ENCODE measurements at regions of chr22 and their contacts with region 1.

Region 1: DNA sequence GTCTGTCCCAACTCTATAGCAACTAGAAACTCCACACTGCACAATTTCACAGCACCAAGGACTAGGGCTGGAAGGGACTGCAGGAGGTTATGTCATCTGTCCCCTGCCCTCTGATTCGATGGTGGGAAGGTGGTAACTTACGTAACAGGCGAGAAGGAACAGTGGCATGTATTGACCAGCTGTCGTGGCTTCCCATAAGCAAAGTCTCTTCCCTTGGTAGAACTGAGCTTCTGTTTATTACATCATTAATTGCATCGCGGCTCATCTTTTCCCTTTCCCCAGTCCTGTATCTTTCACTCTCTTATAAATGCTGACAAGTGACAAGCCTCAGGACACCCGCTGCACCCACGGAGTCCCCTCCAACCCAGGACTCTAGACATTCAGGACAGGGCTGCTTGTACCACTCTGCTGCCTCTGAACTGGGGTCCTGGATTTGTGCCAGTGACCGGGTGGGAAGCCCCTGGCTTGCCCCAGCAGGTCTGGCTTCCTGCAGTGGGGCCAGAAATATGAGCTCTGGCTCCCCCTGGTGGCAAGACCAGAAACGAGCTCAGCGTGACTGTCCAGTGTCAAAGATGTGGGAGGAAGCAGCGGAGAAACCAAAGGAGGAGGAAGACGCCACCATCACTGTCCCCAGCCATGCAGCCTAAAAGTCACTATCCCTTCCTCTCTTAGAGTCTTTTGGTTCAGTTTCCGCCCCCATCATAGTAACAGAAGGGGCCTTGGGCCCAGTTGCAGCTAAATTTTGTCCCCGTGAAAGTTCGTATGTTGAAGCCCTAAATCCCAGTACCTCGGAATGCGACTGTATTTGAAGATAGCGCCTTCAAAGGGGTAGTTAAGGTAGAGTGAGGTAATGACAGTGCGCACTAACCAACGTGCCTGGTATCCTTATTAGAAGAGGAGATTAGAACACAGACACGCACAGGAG is 84.5 kb downstream of the ISX start:
- DNase-seq: peak; percentile 46 to 75 (median 59)
- ATAC-seq: peak in 3 of 4 donors; percentile 54 to 80 (median 72)
- H3K4me3 ChIP-seq: no peak overlapping the region
- H3K27ac ChIP-seq: no peak overlapping the region
- H3K4me1 ChIP-seq: peaks cover 0 to 7% (median 0%) of the 10 kb centered on the region in 12 donors
- H3K27me3 ChIP-seq: peaks cover 0 to 21% (median 1%) of the 10 kb centered on the region in 9 donors
- CTCF ChIP-seq: peak; percentile 52 to 80 (median 71)
- POLR2A ChIP-seq: no peak

Region 2: GRCh38 chr22:33756508-33756949 is 1393.9 kb before region 1 on chr22:
- intact Hi-C with region 1: loop called in 1 of 10 experiments (anchors 10 kb)
- DNase-seq: peak in 3 of 5 donors; percentile 35 to 43 (median 37)
- ATAC-seq: peak; percentile 42 to 79 (median 62)
- H3K4me3 ChIP-seq: no peak overlapping the region
- H3K27ac ChIP-seq: peak overlapping the region in 4 of 12 donors; percentile 5 to 54 (median 12)
- H3K4me1 ChIP-seq: peaks cover 0 to 27% (median 7%) of the 10 kb centered on the region in 12 donors
- H3K27me3 ChIP-seq: no peaks in the 10 kb centered on the region
- CTCF ChIP-seq: peak in 2 of 12 donors; percentile 7 to 24
- POLR2A ChIP-seq: no peak

Region 3: GRCh38 chr22:34414484-34415440 is 735.7 kb before region 1 on chr22:
- intact Hi-C with region 1: loop called in 5 of 10 experiments (anchors 5 to 10 kb)
- DNase-seq: peak in 2 of 5 donors; percentile 9 to 24
- ATAC-seq: peak in 3 of 4 donors; percentile 65 to 71 (median 68)
- H3K4me3 ChIP-seq: no peak overlapping the region
- H3K27ac ChIP-seq: no peak overlapping the region
- H3K4me1 ChIP-seq: no peaks in the 10 kb centered on the region
- H3K27me3 ChIP-seq: peaks cover 0 to 4% (median 0%) of the 10 kb centered on the region in 9 donors
- CTCF ChIP-seq: peak in 11 of 12 donors; percentile 9 to 54 (median 32)
- POLR2A ChIP-seq: no peak